ENCODE measurements at regions of chr18 and their contacts with region 1.

Region 1: DNA sequence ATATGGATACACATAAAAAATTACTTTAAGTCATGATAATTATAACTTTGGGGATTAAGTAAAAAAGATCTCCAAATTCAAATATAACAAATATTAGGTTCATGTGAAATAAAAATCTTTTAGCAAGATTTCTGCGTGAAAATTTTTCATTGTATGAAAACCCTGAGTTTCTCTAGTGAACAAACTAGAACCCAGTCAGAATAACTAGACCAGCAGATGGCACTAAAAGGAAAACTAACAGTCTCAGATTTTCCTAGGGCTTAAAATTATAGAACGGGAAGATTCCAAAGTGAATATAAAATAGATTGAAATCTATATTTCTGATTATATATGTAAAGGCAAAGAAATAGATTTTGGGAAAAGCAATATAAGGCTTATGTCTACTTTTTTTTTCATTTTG is 43.3 kb downstream of the TMEM200C start:
- DNase-seq: no peak
- ATAC-seq: no peak
- H3K4me3 ChIP-seq: no peak overlapping the region
- H3K27ac ChIP-seq: no peak overlapping the region
- H3K4me1 ChIP-seq: no peaks in the 10 kb centered on the region
- H3K27me3 ChIP-seq: peaks cover 0 to 46% (median 9%) of the 10 kb centered on the region in 9 donors
- CTCF ChIP-seq: peak in 3 of 12 donors; percentile 20 to 29 (median 25)
- POLR2A ChIP-seq: no peak

Region 2: GRCh38 chr18:5787936-5788335 is 64.1 kb before region 1 on chr18:
- intact Hi-C with region 1: loop called in 1 of 10 experiments (anchors 10 kb)
- DNase-seq: no peak
- ATAC-seq: no peak
- H3K4me3 ChIP-seq: no peak overlapping the region
- H3K27ac ChIP-seq: no peak overlapping the region
- H3K4me1 ChIP-seq: no peaks in the 10 kb centered on the region
- H3K27me3 ChIP-seq: no peaks in the 10 kb centered on the region
- CTCF ChIP-seq: no peak
- POLR2A ChIP-seq: no peak

Region 3: GRCh38 chr18:6401687-6402086 is 549.7 kb after region 1 on chr18:
- intact Hi-C with region 1: no loop called
- DNase-seq: no peak
- ATAC-seq: peak in 2 of 4 donors; percentile 32 to 60
- H3K4me3 ChIP-seq: no peak overlapping the region
- H3K27ac ChIP-seq: no peak overlapping the region
- H3K4me1 ChIP-seq: peaks cover 0 to 10% (median 0%) of the 10 kb centered on the region in 12 donors
- H3K27me3 ChIP-seq: peaks cover 0 to 3% (median 0%) of the 10 kb centered on the region in 9 donors
- CTCF ChIP-seq: peak in 6 of 12 donors; percentile 25 to 51 (median 32)
- POLR2A ChIP-seq: no peak

Measured in heart left ventricle (tissue), 16 donors.